ENCODE measurements at regions of chr14 and their contacts with region 1.

Region 1: DNA sequence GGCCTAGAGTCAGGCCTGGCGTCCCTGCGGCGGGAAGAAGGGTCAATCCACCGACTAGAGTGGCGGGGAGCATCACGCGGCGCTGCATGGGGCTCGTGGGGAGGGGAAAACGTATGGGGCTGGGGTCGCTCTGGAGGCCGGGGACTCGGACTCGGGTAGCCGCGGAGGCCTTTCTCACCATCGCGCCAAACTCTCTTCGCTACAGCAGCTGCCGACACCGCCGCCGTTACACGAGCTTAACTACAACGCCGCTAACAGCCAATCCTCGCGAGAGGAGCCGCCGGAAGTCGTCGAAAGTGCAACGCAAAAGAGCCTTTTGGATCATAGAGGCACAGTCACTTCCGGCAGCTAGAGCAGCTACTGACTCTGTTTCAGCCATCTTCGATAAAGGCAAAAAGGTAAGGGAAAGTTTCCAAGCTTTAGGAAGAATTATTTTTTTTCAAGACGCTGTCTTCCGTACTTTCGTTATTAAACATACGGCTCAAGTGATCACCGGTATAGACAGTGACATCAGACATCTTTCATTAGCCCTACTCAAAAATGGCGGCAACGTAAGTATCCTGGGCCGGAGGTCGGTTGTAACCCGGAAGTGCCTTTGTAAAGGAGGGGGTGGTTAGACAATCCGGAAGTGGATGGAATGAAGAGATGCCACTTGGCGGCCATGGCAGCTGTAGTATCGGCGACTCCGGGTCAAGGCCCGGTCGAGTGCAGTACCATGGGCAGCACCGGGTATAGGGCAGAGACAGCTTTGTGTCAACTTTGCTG is at the starts of genes ERH and SLC39A9:
- DNase-seq: peak; percentile 87 to 98 (median 94)
- ATAC-seq: peak; percentile 79
- H3K4me3 ChIP-seq: peak within 1 kb of the TSS; percentile 69 to 78
- H3K4me3 Mint-ChIP-seq: peak within 1 kb of the TSS; percentile 99
- H3K27ac ChIP-seq: peak within 1 kb of the TSS; percentile 86 to 92
- H3K27ac Mint-ChIP-seq: peak within 1 kb of the TSS; percentile 100
- H3K4me1 ChIP-seq: peaks cover 58% of the 10 kb centered on the region
- H3K4me1 Mint-ChIP-seq: peaks cover 78% of the 10 kb centered on the region
- H3K27me3 ChIP-seq: no peaks in the 10 kb centered on the region
- H3K27me3 Mint-ChIP-seq: no peaks in the 10 kb centered on the region
- CTCF ChIP-seq: no peak
- total RNA-seq, gene ERH: 95.6 to 97.2 TPM
- total RNA-seq, gene SLC39A9: 15.8 to 18.5 TPM

Region 2: DNA sequence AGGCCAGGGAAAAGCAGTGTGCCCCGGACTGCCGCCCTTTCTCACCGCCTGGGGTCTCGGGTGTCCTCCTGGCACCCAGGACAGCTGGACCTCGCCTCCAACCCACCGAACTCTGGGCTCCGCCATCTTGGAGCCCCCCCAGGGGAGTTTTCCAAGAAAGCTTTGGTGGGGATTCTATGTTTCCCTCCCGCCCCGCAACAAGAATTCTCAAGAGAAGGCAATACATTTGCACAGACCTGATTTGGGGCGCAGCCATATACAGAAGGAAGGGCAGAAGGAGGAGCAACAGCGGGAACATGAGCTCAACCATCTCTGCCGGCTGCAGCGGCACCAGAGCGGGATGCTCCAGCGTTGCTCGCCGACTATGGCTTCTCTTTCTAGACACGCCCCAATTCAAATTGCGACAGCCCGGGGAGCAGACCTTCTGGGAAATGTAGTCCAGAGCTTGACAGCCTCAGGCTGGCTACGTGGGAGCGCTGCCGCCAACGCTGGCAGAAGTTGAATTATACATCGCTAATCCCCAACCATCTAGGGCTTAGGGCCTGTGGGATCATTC is 1702.8 kb before region 1 on chr14 and contains the start of gene RDH11:
- CTCF ChIA-PET with region 1: no interaction called
- POLR2A ChIA-PET with region 1: interaction called, 3 read pairs
- intact Hi-C with region 1: loop called in 1 of 2 experiments (anchors 5 kb)
- DNase-seq: peak; percentile 51 to 93 (median 82)
- ATAC-seq: peak; percentile 95
- H3K4me3 ChIP-seq: peak within 1 kb of the TSS; percentile 78 to 86
- H3K4me3 Mint-ChIP-seq: peak within 1 kb of the TSS; percentile 88
- H3K27ac ChIP-seq: peak within 1 kb of the TSS; percentile 52 to 87
- H3K27ac Mint-ChIP-seq: peak within 1 kb of the TSS; percentile 92
- H3K4me1 ChIP-seq: peaks cover 11% of the 10 kb centered on the region
- H3K4me1 Mint-ChIP-seq: peaks cover 23% of the 10 kb centered on the region
- H3K27me3 ChIP-seq: no peaks in the 10 kb centered on the region
- H3K27me3 Mint-ChIP-seq: no peaks in the 10 kb centered on the region
- CTCF ChIP-seq: no peak
- total RNA-seq, gene RDH11: 13.9 to 14.5 TPM

Region 3: DNA sequence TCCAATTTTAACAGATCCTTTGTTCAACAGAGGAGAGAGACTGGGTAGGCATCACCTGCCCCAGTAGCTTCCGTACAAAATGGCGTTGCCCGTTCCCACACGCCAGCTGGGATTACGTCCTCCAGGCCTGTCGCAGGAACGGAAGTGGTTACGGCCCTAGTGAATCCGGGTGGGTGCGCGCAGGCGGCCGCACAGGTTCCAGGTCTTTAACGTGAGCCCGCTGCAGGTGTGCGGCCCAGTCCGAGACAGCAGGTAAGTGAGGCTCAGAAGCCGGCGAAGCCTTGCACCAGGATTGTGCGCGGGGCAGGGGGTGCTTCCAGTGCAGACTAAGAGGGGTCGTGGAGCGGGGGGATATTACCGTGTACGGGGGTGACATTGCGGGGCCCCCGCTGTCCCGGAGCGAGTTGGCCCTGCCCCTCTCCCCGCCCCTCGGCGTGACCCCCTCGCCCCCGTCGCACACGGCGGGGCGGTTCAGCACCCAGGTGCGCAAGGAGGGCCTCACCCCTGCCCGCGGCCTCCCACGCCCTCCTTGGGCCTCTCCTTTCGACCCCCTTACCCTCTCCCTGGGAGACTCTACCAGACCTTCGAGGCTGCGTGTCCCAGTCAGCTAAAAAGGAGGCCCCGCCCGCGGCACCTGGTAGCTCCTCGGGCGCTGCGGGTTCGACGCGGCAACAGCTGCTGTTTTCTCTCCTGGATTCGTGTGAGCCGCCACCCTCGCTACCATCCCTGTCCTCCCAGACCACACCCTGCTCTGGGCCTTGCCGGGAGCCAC is 206.7 kb before region 1 on chr14 and contains the start of gene EXD2:
- CTCF ChIA-PET with region 1: no interaction called
- POLR2A ChIA-PET with region 1: no interaction called
- intact Hi-C with region 1: loop called in 1 of 2 experiments (anchors 2 kb)
- DNase-seq: peak; percentile 36 to 87 (median 72)
- ATAC-seq: peak; percentile 79
- H3K4me3 ChIP-seq: peak within 1 kb of the TSS; percentile 72 to 91
- H3K4me3 Mint-ChIP-seq: peak within 1 kb of the TSS; percentile 95
- H3K27ac ChIP-seq: peak within 1 kb of the TSS; percentile 56 to 60
- H3K27ac Mint-ChIP-seq: peak within 1 kb of the TSS; percentile 97
- H3K4me1 ChIP-seq: peaks cover 7% of the 10 kb centered on the region
- H3K4me1 Mint-ChIP-seq: peaks cover 29% of the 10 kb centered on the region
- H3K27me3 ChIP-seq: no peaks in the 10 kb centered on the region
- H3K27me3 Mint-ChIP-seq: no peaks in the 10 kb centered on the region
- CTCF ChIP-seq: no peak
- total RNA-seq, gene EXD2: 5.9 to 7.9 TPM

Region 4: DNA sequence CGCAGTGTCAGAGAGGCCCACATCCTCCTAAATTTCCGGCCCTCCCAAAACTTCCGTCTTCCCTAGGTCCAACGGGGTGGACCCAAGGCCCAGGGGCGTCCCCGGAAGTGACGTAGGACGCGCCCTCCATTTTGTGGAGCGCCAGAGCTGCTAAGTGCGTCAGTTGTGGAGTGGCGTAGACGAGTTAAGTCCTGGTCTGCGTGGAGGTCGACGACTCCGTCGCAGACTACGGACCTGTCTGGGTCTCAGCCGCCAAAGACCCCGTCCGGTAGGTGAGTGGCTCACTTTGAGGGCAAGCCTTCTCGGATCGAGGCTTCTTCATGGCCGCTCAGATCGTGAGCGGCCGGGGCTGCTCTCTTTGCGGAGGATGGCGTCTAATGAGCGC is 368.7 kb after region 1 on chr14 and contains the start of gene SRSF5:
- CTCF ChIA-PET with region 1: no interaction called
- POLR2A ChIA-PET with region 1: interaction called, 14 read pairs
- intact Hi-C with region 1: loop called in 1 of 2 experiments (anchors 5 kb)
- DNase-seq: peak; percentile 86 to 97 (median 96)
- ATAC-seq: peak; percentile 80
- H3K4me3 ChIP-seq: peak within 1 kb of the TSS; percentile 78 to 88
- H3K4me3 Mint-ChIP-seq: peak within 1 kb of the TSS; percentile 99
- H3K27ac ChIP-seq: peak within 1 kb of the TSS; percentile 97 to 99
- H3K27ac Mint-ChIP-seq: peak within 1 kb of the TSS; percentile 100
- H3K4me1 ChIP-seq: peaks cover 50% of the 10 kb centered on the region
- H3K4me1 Mint-ChIP-seq: peaks cover 67% of the 10 kb centered on the region
- H3K27me3 ChIP-seq: no peaks in the 10 kb centered on the region
- H3K27me3 Mint-ChIP-seq: no peaks in the 10 kb centered on the region
- CTCF ChIP-seq: no peak
- total RNA-seq, gene SRSF5: 1,544 to 1,597 TPM

Region 5: GRCh38 chr14:70655110-70655826 is 1257.0 kb after region 1 on chr14:
- CTCF ChIA-PET with region 1: no interaction called
- POLR2A ChIA-PET with region 1: no interaction called
- intact Hi-C with region 1: loop called in 1 of 2 experiments (anchors 2 kb)
- DNase-seq: peak; percentile 31 to 91 (median 79)
- ATAC-seq: peak; percentile 88
- H3K4me3 ChIP-seq: peak overlapping the region; percentile 32 to 46
- H3K4me3 Mint-ChIP-seq: peak overlapping the region; percentile 86
- H3K27ac ChIP-seq: peak overlapping the region; percentile 76 to 90
- H3K27ac Mint-ChIP-seq: peak overlapping the region; percentile 99
- H3K4me1 ChIP-seq: peaks cover 91% of the 10 kb centered on the region
- H3K4me1 Mint-ChIP-seq: peaks cover 93% of the 10 kb centered on the region
- H3K27me3 ChIP-seq: no peaks in the 10 kb centered on the region
- H3K27me3 Mint-ChIP-seq: no peaks in the 10 kb centered on the region
- CTCF ChIP-seq: no peak